ENCODE measurements at regions of chr16 and their contacts with region 1.

Region 1: DNA sequence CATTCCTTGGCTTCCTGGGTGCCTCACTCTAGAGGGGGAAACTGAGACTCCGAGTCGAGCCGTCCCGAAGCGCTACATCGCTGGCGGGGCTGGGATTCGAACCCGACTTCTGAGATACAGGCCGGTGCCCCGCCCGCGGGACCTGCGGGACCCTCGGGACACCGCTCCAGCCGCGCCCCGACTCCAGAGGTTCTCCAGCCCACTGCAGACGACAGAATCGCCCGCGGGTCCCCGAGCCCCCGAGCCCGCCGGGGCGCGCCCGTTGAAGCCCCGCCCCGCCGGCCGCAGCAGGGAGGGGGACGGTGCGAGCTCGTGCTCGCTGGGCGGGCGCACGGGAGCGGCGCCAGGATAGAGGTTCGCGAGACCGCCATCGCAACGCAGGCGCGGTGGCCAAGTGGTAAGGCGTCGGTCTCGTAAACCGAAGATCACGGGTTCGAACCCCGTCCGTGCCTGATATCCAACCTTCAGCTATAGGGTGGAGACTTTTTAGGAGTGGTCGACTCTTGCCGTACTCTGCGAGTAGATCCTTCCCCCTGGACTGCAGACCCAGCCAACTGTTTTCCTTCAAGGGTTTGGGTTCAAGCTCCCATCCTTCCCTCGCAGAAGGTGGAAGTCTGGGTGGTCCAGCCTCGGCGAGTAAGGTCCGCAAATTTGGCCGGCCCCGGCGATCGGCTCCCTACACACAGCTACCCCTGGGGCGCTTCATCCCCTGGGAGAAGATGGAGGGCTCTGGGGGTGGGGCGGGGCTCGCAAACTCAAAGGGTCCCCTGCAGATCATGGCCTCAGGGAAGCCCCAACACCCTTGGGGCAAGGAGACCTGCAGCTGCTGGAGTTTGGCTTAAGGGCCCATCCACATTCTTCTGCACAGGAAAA is 214.6 kb downstream of the MRTFB start:
- DNase-seq: peak; percentile 96

Region 2: DNA sequence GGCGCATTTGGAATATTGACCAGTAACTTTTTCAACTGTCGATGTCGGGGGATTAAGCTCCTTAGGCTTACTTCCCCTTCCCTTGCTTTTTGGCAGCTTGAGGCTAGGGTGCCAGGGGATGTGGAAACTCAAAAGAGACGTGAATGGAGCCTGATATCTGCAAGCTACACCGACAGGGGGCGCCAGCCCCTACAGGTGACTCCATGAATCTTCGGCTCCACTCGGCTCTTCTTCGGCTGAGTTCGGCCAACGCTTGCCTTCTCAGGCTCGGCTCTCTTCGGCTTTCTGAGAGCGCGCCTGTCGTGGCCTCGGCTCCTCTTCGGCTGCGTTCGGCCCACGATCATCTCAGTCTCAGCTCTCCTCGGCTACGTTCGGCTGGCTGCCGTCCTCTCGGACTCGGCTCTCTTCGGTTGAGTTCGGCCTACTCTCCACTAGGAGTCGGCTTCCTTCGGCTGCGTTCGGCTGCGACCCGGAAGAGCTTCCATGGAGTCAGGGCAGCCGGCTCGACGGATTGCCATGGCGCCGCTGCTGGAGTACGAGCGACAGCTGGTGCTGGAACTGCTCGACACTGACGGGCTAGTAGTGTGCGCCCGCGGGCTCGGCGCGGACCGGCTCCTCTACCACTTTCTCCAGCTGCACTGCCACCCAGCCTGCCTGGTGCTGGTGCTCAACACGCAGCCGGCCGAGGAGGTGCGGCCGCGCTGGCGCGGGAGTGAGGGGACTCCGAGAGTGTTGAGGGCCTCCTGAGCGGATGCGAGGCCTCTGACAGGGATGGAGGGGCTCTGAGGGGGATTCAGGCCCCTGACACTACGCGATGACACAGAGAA is 365.9 kb before region 1 on chr16 and contains the start of gene ERCC4:
- in situ Hi-C with region 1: loop called (anchors 10 kb)
- DNase-seq: peak; percentile 100

Region 3: DNA sequence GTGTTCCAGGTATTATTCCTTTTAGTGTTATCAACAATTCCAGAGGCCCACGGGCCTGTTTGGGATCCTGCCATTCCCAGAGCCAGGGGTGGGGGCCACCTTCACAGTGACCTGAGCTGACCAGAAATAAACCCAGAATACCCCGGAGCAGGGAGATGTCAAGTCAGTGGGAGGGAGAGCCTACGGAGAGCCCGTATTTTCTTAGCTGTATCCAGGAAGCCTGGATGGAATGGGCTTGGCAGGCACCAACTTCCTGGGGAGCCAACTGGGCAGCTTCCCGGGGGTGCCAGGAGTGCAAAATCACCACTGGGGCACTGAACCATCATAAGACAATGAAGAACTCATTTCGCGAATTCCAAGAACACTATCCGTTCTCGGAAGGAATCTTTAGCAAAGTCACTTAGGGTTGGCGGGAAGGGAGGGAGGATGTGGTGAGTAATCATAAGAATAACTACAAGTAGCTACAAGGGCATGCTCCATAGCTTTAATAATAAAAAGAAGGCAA is 227.8 kb before region 1 on chr16:
- in situ Hi-C with region 1: no loop called
- DNase-seq: no peak

Region 4: DNA sequence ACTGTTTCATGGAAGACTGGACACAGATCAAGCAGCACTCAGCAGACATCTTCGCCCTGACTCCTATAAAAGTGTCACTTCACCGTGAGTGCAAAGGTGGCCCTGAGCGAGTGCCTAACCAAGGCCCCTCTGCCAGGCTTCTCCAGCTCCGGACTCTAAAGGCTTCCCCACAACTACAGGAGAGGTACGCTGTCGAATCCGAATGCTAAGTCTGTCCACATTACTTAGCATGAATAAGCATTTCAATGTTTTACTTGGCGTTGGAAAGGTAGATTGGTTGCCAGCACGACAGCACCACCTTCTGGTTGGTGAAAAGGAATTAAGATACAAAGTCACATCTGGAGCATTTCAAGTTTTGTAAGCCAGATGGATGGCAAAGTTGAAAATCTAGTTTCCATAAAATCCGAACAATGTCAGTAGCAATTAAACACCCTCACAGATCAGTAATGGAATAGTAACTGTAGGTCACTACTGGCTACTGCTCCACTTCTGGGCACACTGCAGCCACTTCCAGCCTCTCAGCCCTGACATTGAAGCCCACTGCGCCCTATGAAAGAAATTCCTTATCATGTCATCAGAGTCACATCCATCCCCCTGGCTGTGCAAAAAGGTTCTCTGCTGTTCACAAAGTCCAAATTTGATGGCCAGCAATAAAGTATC is 243.4 kb after region 1 on chr16:
- in situ Hi-C with region 1: loop called (anchors 25 kb)
- DNase-seq: peak; percentile 69